ENCODE measurements at regions of chr4 and their contacts with region 1.

Region 1: GRCh38 chr4:173859091-173859713 is 329.2 kb upstream of the HAND2 start:
- DNase-seq: no peak
- H3K27ac ChIP-seq: no peak overlapping the region
- CTCF ChIP-seq: no peak

Region 2: GRCh38 chr4:173490817-173491528 is 368.2 kb before region 1 on chr4:
- CTCF ChIA-PET with region 1: interaction called, 10 read pairs
- POLR2A ChIA-PET with region 1: no interaction called
- DNase-seq: no peak
- H3K27ac ChIP-seq: no peak overlapping the region
- CTCF ChIP-seq: no peak

Region 3: DNA sequence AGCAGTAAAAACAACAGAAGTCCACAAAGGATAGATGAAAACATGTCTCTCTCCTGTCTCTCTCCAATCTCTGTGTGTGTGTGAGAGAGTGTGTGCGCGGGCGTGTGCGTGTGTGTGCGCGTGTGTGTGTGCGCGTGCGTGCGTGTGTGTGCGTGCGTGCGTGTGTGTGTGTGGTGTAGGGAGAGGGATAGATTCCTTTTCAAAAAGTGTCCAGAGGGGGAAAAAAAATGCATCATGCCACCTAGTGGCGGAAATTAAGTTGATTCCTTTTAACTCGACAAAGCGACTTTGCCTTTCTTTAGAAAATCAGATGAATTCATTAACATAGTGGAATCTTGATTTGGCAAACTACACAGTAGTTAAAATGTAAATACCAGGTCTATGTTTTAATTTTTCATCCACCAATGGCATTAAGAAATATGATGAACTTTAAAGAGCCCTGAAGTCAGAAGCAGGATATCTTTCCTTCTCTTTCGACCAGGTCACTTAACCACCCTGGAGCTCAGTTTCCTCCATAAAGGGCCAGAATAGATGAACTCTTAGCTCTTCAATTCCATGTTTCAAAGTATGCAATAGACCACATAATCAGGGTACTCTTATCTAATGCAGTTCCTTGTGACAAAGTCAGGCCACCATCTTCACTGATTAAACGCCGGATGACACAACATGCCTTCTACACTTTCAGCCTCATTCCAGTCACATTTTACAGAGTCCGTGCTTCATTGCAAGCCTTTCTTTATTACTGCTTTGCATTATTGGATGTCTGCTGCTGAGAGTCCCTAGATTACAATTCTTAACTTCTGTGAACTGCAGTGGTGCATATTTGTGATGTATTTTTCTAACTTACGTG is 261.5 kb after region 1 on chr4:
- CTCF ChIA-PET with region 1: no interaction called
- POLR2A ChIA-PET with region 1: no interaction called
- DNase-seq: peak; percentile 51
- H3K27ac ChIP-seq: no peak overlapping the region
- CTCF ChIP-seq: peak; percentile 64

Measured in RWPE1 (cell line).